ENCODE measurements at regions of chr22 and their contacts with region 1.

Region 1: DNA sequence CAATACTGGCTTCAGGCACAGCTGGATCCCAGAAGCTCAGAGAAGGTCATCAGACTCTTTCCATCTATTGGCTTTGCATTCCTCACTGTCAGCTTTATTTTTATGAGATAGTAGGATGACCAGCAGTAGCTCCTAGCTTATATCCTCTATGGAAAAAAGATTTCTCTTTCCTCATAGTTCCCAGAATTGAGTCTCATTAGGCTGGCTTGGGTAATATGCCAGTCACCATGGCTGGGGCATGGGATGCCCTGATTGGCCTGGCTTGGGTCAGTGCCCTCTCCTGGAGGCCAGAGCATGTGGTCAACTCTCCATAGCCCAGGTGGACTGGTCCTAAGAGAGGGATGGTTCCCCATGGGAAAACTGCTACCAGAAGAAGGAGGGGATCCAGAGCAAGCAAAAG is 14.1 kb upstream of the CCDC134 start:
- DNase-seq: no peak
- H3K4me3 Mint-ChIP-seq: no peak overlapping the region
- H3K27ac Mint-ChIP-seq: no peak overlapping the region
- H3K4me1 Mint-ChIP-seq: peaks cover 47% of the 10 kb centered on the region
- H3K27me3 Mint-ChIP-seq: no peaks in the 10 kb centered on the region

Region 2: GRCh38 chr22:41800348-41801146 is 14.1 kb after region 1 on chr22 and contains the start of gene CCDC134:
- CTCF ChIA-PET with region 1: interaction called, 38 read pairs
- POLR2A ChIA-PET with region 1: interaction called, 39 read pairs
- DNase-seq: peak; percentile 91
- H3K4me3 Mint-ChIP-seq: peak within 1 kb of the TSS; percentile 99
- H3K27ac Mint-ChIP-seq: peak within 1 kb of the TSS; percentile 98
- H3K4me1 Mint-ChIP-seq: peaks cover 47% of the 10 kb centered on the region
- H3K27me3 Mint-ChIP-seq: no peaks in the 10 kb centered on the region
- total RNA-seq, gene CCDC134: 21.0 to 21.6 TPM